Activated B cell treated with CpG ODN at 0.5 μM for 24 hours (primary cell): ENCODE measurements at regions of chr6 and their contacts with region 1.

Region 1: DNA sequence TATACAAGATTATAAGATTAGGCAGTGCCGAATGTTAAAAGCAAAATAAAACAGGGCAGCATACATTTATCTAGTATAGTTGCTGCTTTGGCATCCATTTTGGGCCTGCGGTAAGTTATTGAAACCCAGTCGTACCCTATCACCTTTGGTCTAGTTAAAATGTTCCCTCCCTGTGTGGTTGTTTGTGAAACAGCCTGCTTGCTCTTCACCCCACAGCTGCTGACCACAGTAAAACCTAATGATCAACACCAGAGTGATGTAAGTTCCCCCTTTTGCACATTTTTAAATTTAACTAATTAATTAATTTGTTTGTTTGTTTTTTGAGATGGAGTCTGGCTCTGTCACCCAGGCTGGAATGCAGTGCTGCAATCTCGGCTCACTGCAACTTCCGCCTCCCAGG is 50.3 kb upstream of the TXNDC5 start:
- DNase-seq: no peak
- ATAC-seq: peak; percentile 35
- H3K4me3 Mint-ChIP-seq: no peak overlapping the region
- H3K27ac Mint-ChIP-seq: peak overlapping the region; percentile 64
- H3K4me1 Mint-ChIP-seq: peaks cover 23% of the 10 kb centered on the region
- H3K27me3 Mint-ChIP-seq: no peaks in the 10 kb centered on the region
- CTCF ChIP-seq: no peak

Region 2: DNA sequence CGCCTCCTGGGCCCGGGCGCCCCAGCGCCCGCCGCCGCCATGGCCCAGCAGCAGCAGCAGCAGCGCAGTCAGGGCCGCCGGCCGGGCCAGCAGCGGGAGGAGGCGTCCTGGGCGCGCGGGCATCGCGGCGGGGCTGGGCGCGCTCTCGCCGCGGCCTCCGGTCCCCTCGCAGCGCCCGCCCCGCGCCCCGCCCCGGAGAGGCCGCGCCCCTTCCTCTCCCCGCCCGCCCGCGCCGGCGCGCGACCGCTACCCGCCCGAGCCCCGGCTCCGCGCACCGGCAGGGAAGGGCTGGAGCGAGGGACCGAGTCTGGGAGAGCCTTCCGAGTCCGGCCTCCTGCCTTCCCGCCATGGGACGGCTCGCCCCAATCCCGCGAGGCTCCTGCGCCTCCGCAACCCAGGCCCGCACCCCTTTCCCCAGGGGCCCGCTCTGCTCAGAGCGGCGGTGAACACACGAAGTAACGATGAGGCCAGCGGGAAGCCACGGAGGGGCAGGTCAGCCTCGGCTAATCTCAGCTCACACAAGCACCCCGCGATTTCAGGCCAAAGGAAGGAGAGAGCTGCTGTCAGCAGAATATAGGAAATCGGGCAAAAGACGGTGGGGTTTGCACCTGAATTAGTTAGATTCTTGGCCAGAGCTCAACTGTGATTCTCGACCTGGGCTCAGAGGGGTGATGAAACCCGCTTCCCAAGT is 50.0 kb before region 1 on chr6 and contains the start of gene TXNDC5:
- CTCF ChIA-PET with region 1: no interaction called
- POLR2A ChIA-PET with region 1: interaction called, 8 read pairs
- intact Hi-C with region 1: loop called (anchors 1 kb)
- DNase-seq: peak; percentile 78
- ATAC-seq: peak; percentile 79
- H3K4me3 Mint-ChIP-seq: peak within 1 kb of the TSS; percentile 85
- H3K27ac Mint-ChIP-seq: peak within 1 kb of the TSS; percentile 83
- H3K4me1 Mint-ChIP-seq: peaks cover 26% of the 10 kb centered on the region
- H3K27me3 Mint-ChIP-seq: no peaks in the 10 kb centered on the region
- CTCF ChIP-seq: no peak
- total RNA-seq, gene TXNDC5: 68.2 TPM in 2 replicates

Region 3: GRCh38 chr6:7939184-7939863 is 21.5 kb before region 1 on chr6:
- CTCF ChIA-PET with region 1: no interaction called
- POLR2A ChIA-PET with region 1: interaction called, 8 read pairs
- intact Hi-C with region 1: loop called (anchors 1 kb)
- DNase-seq: no peak
- ATAC-seq: peak; percentile 76
- H3K4me3 Mint-ChIP-seq: no peak overlapping the region
- H3K27ac Mint-ChIP-seq: peak overlapping the region; percentile 25
- H3K4me1 Mint-ChIP-seq: peaks cover 32% of the 10 kb centered on the region
- H3K27me3 Mint-ChIP-seq: no peaks in the 10 kb centered on the region
- CTCF ChIP-seq: no peak